MCF 10A (cell line): ENCODE measurements at regions of chr17 and their contacts with region 1.

Region 1: GRCh38 chr17:51371732-51372151 is 111.4 kb downstream of the UTP18 start:
- DNase-seq: peak; percentile 77
- H3K4me3 Mint-ChIP-seq: peak overlapping the region; percentile 75
- H3K27ac Mint-ChIP-seq: peak overlapping the region; percentile 80
- H3K4me1 Mint-ChIP-seq: peaks cover 13% of the 10 kb centered on the region
- H3K27me3 Mint-ChIP-seq: no peaks in the 10 kb centered on the region
- CTCF ChIP-seq: peak; percentile 74

Region 2: DNA sequence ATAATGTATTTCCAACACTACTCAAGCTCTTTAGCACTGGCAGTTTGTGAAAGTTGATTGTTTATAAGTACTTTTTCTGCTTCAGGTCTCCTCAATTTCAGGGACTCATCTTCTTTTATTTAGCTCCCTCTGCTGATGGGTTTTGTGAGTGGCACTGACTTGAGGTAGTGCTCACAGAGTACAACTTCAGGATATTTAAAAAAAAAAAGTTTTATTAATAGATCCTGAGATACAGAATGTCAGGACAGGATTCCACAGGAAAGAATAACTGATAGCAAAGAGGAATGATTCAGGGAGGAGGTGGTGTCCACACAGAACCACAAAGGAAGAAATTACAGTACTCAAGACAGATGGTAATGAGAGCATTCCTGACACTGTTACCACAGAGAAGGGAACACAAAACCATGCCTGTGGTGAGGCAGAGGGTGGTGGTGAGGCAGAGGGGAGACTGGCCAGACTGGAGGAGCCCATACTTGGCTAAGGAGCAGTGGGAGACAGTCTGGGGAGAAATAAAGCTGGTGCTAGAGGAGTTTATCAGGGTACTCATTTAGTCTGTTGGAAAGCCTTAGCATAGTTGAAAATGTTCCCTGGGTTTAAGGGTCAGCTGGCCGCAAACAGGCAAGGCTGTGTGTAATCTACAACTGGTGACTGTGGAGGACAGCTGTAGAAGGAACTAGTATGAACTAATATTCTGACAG is 314.8 kb before region 1 on chr17:
- CTCF ChIA-PET with region 1: no interaction called
- POLR2A ChIA-PET with region 1: no interaction called
- intact Hi-C with region 1: no loop called
- DNase-seq: peak; percentile 63
- H3K4me3 Mint-ChIP-seq: no peak overlapping the region
- H3K27ac Mint-ChIP-seq: peak overlapping the region; percentile 21
- H3K4me1 Mint-ChIP-seq: peaks cover 16% of the 10 kb centered on the region
- H3K27me3 Mint-ChIP-seq: no peaks in the 10 kb centered on the region
- CTCF ChIP-seq: no peak

Region 3: DNA sequence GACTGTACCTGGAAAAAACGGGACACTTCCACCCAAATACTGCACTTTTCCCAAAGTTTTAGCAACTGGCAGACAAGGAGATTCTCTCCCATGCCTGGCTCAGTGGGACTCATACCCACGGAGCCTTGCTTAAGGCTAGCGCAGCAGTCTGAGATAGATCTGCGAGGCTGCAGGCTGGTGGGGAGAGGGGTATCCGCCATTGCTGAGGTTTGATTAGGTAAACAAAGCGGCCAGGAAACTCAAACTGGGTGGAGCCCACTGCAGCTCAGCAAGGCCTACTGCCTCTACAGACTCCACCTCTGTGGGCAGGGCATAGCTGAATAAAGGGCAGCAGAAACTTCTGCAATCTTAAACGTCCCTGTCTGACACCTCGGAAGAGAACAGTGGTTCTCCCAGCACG is 66.6 kb before region 1 on chr17:
- CTCF ChIA-PET with region 1: no interaction called
- POLR2A ChIA-PET with region 1: no interaction called
- intact Hi-C with region 1: no loop called
- DNase-seq: no peak
- H3K4me3 Mint-ChIP-seq: no peak overlapping the region
- H3K27ac Mint-ChIP-seq: no peak overlapping the region
- H3K4me1 Mint-ChIP-seq: no peaks in the 10 kb centered on the region
- H3K27me3 Mint-ChIP-seq: no peaks in the 10 kb centered on the region
- CTCF ChIP-seq: no peak

Region 4: DNA sequence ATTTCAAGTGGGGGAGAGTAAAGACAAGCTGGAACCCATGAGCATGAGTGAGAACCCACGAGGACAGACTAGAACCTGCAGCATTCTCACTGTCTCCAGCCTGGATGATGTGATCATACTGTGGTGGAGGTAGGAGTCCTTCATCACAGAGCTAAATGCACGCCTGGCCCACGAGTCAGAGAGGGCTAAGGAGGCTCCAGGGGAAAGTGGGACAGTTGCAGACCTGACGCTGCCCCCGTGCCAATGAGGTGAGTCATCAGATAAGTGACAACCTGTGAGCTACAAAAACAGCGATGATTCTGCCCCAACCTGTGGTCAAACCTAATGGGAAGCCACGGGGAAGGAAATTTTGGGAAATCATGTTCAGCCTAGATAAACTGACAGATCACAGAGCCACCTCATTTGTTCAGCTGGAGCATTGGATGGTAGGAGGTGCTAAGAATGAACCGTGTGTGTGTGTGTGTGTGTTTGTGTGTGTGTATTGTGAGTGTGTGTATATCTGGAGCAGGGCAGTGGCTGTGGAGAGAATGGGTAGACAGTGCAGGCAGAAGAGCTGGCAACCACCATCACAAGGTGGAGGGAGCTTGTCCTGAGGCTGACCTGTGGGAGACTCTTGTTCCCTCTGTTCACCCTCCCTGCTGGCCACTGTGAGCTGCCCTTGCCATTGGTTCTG is 20.4 kb after region 1 on chr17:
- CTCF ChIA-PET with region 1: interaction called, 19 read pairs
- POLR2A ChIA-PET with region 1: no interaction called
- intact Hi-C with region 1: no loop called
- DNase-seq: no peak
- H3K4me3 Mint-ChIP-seq: no peak overlapping the region
- H3K27ac Mint-ChIP-seq: no peak overlapping the region
- H3K4me1 Mint-ChIP-seq: peaks cover 9% of the 10 kb centered on the region
- H3K27me3 Mint-ChIP-seq: peaks cover 67% of the 10 kb centered on the region
- CTCF ChIP-seq: no peak

Region 5: GRCh38 chr17:51537996-51538550 is 166.3 kb after region 1 on chr17:
- CTCF ChIA-PET with region 1: interaction called, 100 read pairs
- POLR2A ChIA-PET with region 1: interaction called, 4 read pairs
- intact Hi-C with region 1: loop called (anchors 1 kb)
- DNase-seq: no peak
- H3K4me3 Mint-ChIP-seq: no peak overlapping the region
- H3K27ac Mint-ChIP-seq: no peak overlapping the region
- H3K4me1 Mint-ChIP-seq: no peaks in the 10 kb centered on the region
- H3K27me3 Mint-ChIP-seq: no peaks in the 10 kb centered on the region
- CTCF ChIP-seq: no peak

Region 6: GRCh38 chr17:51734462-51734861 is 362.7 kb after region 1 on chr17:
- CTCF ChIA-PET with region 1: interaction called, 5 read pairs
- POLR2A ChIA-PET with region 1: no interaction called
- intact Hi-C with region 1: loop called (anchors 1 kb)
- DNase-seq: peak; percentile 33
- H3K4me3 Mint-ChIP-seq: no peak overlapping the region
- H3K27ac Mint-ChIP-seq: no peak overlapping the region
- H3K4me1 Mint-ChIP-seq: no peaks in the 10 kb centered on the region
- H3K27me3 Mint-ChIP-seq: peaks cover 11% of the 10 kb centered on the region
- CTCF ChIP-seq: peak; percentile 74

Region 7: GRCh38 chr17:51888816-51889215 is 517.1 kb after region 1 on chr17:
- CTCF ChIA-PET with region 1: no interaction called
- POLR2A ChIA-PET with region 1: no interaction called
- intact Hi-C with region 1: no loop called
- DNase-seq: no peak
- H3K4me3 Mint-ChIP-seq: no peak overlapping the region
- H3K27ac Mint-ChIP-seq: no peak overlapping the region
- H3K4me1 Mint-ChIP-seq: no peaks in the 10 kb centered on the region
- H3K27me3 Mint-ChIP-seq: peaks cover 42% of the 10 kb centered on the region
- CTCF ChIP-seq: no peak

Region 8: DNA sequence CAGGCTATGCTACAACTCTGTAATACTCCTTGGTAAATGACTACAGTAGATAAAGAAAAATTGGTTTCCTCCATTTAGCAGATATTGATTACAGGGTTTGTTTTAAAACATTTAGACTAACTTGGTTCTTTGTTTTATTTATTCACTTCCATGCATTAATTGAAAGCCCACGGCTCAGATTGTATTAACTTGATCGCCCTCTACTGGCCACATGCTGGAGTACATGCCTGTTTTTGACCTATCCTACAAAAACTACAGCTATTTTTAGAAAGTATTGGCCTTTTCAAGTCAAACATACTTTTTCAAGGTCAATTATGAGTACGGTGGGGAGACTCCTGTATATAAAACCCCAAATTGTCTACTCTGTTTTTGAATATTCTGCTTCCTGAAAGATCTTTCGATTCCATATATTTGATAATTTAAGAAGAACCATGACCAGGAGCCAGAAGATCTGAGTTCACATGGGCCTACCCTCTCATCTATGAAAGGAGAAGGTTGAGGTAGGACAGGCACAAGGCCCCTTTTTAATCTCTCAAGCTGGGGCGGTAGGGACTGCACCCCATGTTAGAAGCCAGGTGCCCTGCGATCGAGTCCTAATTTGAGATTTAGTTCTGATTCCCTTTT is 735.0 kb after region 1 on chr17:
- CTCF ChIA-PET with region 1: interaction called, 11 read pairs
- POLR2A ChIA-PET with region 1: no interaction called
- intact Hi-C with region 1: loop called (anchors 2 kb)
- DNase-seq: peak; percentile 61
- H3K4me3 Mint-ChIP-seq: no peak overlapping the region
- H3K27ac Mint-ChIP-seq: no peak overlapping the region
- H3K4me1 Mint-ChIP-seq: no peaks in the 10 kb centered on the region
- H3K27me3 Mint-ChIP-seq: peaks cover 32% of the 10 kb centered on the region
- CTCF ChIP-seq: peak; percentile 77

Region 9: DNA sequence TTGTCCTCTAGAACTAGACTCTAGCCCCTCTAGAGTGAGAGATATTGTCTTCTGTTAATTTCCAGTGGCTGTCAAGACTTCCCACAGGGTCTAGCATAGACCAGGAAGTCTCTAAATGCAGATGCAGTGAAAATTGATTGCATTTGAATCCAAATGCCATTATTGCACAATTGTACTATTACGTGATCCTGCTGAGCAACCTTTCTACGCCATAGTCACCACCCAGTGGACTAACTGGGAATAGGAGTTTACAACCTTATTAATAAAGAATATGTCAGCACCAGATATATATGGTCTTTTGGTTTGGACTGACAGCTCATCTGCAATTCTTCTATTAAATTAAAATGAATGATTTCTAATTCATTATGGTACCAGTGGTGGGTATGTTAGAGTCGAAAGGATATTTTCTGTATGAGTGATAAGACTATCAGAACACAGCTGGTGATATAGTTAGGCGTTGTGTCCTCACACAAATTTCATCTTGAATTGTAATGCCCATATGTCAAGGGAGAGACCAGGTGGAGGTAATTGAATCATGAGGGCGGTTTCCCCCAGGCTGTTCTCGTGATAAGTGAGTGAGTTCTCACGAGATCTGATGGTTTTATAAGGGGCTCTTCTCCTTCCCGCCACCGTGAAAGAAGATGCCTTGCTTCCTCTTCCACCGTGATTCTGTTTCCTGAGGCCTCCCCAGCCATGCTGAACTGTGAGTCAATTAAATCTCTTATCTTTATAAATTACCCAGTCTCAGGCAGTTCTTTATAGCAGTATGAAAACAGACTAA is 925.7 kb after region 1 on chr17:
- CTCF ChIA-PET with region 1: interaction called, 4 read pairs
- POLR2A ChIA-PET with region 1: no interaction called
- intact Hi-C with region 1: loop called (anchors 2 kb)
- DNase-seq: peak; percentile 50
- H3K4me3 Mint-ChIP-seq: no peak overlapping the region
- H3K27ac Mint-ChIP-seq: no peak overlapping the region
- H3K4me1 Mint-ChIP-seq: no peaks in the 10 kb centered on the region
- H3K27me3 Mint-ChIP-seq: peaks cover 94% of the 10 kb centered on the region
- CTCF ChIP-seq: peak; percentile 48

Region 10: DNA sequence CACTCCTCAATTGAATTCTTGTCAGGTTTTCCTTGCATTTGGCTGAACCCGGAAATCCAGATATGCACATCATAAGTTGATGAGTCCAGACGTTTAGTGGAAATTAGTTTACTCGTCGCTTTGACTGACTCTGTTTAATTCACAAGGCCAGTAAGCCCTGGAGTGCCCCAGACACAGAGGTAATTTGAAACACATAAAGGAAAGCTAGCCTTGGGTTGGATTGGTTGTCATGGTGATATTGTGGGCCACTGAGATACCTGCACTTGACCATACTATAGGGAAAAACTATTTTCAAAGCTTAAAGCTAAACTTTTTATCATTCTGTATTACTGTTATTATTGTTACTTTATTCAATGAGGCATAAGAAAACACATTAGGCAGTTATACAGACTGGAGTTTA is 965.1 kb after region 1 on chr17:
- CTCF ChIA-PET with region 1: interaction called, 11 read pairs
- POLR2A ChIA-PET with region 1: no interaction called
- intact Hi-C with region 1: no loop called
- DNase-seq: no peak
- H3K4me3 Mint-ChIP-seq: no peak overlapping the region
- H3K27ac Mint-ChIP-seq: no peak overlapping the region
- H3K4me1 Mint-ChIP-seq: no peaks in the 10 kb centered on the region
- H3K27me3 Mint-ChIP-seq: no peaks in the 10 kb centered on the region
- CTCF ChIP-seq: no peak